Caco-2 (cell line): ENCODE measurements at regions of chr10 and their contacts with region 1.

Region 1: GRCh38 chr10:131300508-131300907 is 11.0 kb downstream of the TCERG1L start:
- DNase-seq: no peak
- H3K4me3 ChIP-seq: no peak overlapping the region
- H3K4me3 Mint-ChIP-seq: no peak overlapping the region
- H3K27ac Mint-ChIP-seq: no peak overlapping the region
- H3K4me1 ChIP-seq: no peaks in the 10 kb centered on the region
- H3K4me1 Mint-ChIP-seq: no peaks in the 10 kb centered on the region
- H3K27me3 ChIP-seq: no peaks in the 10 kb centered on the region
- H3K27me3 Mint-ChIP-seq: no peaks in the 10 kb centered on the region
- CTCF ChIP-seq: no peak

Region 2: DNA sequence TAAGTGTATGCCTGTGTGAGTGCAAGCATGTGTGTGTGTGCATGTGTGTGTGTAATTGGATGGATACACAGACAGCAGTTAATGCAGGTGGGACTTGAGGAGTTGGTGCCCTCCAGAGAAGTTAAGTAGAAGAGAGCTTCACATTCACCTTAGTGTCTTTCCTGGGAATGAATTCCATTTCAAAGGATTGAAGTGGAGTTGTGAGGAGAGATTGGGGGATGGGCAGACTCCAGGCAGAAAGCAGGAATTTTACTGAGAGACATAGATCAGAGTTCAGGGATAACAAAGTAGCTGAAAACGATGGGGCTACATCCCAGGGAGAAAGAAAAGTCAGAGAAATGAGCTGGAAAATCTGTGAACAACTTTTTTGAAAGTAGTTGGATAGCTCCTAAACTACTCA is 453.3 kb before region 1 on chr10:
- CTCF ChIA-PET with region 1: no interaction called
- POLR2A ChIA-PET with region 1: no interaction called
- intact Hi-C with region 1: loop called (anchors 5 kb)
- DNase-seq: no peak
- H3K4me3 ChIP-seq: no peak overlapping the region
- H3K4me3 Mint-ChIP-seq: no peak overlapping the region
- H3K27ac Mint-ChIP-seq: no peak overlapping the region
- H3K4me1 ChIP-seq: no peaks in the 10 kb centered on the region
- H3K4me1 Mint-ChIP-seq: no peaks in the 10 kb centered on the region
- H3K27me3 ChIP-seq: no peaks in the 10 kb centered on the region
- H3K27me3 Mint-ChIP-seq: no peaks in the 10 kb centered on the region
- CTCF ChIP-seq: no peak

Region 3: DNA sequence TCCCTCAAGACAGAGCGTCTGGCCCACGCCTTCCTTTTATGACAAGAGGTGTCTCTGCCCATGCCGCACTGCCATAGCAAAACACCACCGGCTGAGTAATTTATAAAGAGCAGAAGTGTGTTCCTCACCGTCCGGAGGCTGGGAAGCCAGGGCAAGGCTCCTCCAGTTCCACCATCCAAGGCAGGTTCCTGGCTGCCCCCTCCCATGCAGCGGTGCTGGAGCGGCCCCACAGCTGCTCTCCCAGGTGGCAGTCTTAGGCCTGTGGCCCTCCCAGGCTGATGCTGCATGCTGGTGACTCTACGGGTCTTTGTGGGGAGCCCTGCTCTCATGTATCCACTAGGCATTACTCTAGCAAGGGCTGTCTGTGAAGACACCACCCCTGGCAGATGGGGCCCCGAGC is 102.1 kb before region 1 on chr10:
- CTCF ChIA-PET with region 1: no interaction called
- POLR2A ChIA-PET with region 1: no interaction called
- intact Hi-C with region 1: no loop called
- DNase-seq: peak in 1 of 2 experiments; percentile 16
- H3K4me3 ChIP-seq: no peak overlapping the region
- H3K4me3 Mint-ChIP-seq: no peak overlapping the region
- H3K27ac Mint-ChIP-seq: no peak overlapping the region
- H3K4me1 ChIP-seq: no peaks in the 10 kb centered on the region
- H3K4me1 Mint-ChIP-seq: no peaks in the 10 kb centered on the region
- H3K27me3 ChIP-seq: no peaks in the 10 kb centered on the region
- H3K27me3 Mint-ChIP-seq: peaks cover 14% of the 10 kb centered on the region
- CTCF ChIP-seq: no peak

Region 4: GRCh38 chr10:131436458-131436857 is 135.9 kb after region 1 on chr10:
- CTCF ChIA-PET with region 1: no interaction called
- POLR2A ChIA-PET with region 1: no interaction called
- intact Hi-C with region 1: no loop called
- DNase-seq: no peak
- H3K4me3 ChIP-seq: no peak overlapping the region
- H3K4me3 Mint-ChIP-seq: no peak overlapping the region
- H3K27ac Mint-ChIP-seq: no peak overlapping the region
- H3K4me1 ChIP-seq: no peaks in the 10 kb centered on the region
- H3K4me1 Mint-ChIP-seq: no peaks in the 10 kb centered on the region
- H3K27me3 ChIP-seq: no peaks in the 10 kb centered on the region; the same call in 1 of the 2 replicates
- H3K27me3 Mint-ChIP-seq: peaks cover 30% of the 10 kb centered on the region
- CTCF ChIP-seq: no peak